ENCODE measurements at regions of chr12 and their contacts with region 1.

Region 1: GRCh38 chr12:42735861-42736361 is 146.4 kb upstream of the PRICKLE1 start:
- DNase-seq: peak; percentile 65
- ATAC-seq: peak; percentile 93 to 95

Region 2: GRCh38 chr12:41724216-41724615 is 1011.7 kb before region 1 on chr12:
- intact Hi-C with region 1: no loop called
- DNase-seq: no peak
- ATAC-seq: no peak

Region 3: GRCh38 chr12:42407306-42407705 is 328.6 kb before region 1 on chr12:
- intact Hi-C with region 1: no loop called
- DNase-seq: no peak
- ATAC-seq: no peak

Region 4: DNA sequence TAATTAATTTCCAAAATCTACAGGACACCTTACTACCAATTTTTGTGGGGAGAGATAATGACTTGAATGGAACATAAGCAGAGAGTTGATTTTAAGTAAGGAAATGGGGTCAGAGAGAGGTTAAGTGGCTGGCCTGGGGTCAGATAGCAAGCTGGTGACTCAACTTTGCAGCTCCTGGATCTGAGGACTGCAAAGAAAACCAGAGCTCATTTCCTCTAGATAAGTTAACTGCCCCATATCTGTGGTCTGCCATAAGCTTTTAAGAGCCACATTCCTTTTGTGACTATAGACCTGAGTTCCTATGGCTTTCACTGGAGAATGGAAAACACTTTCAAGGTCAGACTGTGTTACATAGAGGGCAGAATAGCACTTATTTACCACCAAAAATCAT is 54.8 kb after region 1 on chr12:
- intact Hi-C with region 1: loop called in 1 of 2 experiments (anchors 5 kb)
- DNase-seq: no peak
- ATAC-seq: peak in 1 of 2 donors; percentile 76